Head of caudate nucleus (tissue), 42 donors: ENCODE measurements at regions of chr1 and their contacts with region 1.

Region 1: DNA sequence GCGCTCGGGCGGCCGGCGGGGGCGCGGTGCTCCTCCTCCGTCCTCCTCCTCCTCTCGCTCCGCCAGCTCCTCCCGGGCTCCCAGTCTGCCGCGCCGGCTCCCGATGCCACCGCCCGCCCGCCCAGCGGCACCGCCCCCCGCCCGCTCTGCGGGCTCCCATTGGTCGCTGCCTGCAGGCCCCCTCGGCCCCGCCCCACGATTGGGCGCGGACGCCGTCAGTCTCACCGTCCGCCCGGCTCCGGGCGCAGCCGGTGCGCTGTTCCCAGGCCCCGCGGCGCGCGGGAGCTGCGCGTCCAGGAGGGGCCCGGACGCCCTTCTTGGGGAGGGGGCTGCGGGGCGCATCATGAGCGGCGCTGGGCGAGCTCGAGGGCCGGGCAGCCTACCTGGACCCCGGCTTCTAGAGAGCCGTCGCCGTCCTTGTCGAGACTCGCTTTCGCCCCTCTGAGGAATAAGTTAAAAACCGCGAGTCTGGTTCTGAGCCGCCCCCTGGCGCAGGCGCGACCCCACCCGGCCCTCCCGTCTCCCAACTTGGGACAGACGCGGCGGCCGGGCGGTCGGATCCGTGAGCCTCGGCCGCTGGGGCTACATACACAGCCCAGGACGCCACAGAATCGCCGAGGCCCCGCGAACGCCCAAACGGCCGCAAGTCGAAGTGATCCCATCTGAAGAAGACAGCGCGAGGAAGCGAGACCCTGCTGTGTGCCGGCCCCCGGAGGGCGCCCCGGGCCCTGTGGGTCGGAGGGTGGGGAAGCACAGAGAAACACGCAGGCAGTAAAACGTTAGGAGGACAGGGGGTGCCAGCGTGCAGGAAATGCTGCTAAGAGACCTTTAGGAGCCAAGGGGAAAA is at the start of gene SIPA1L2:
- DNase-seq: peak; percentile 85 to 99 (median 97)

Region 2: GRCh38 chr1:231866392-231867331 is 763.6 kb before region 1 on chr1:
- intact Hi-C with region 1: loop called (anchors 10 kb)
- DNase-seq: peak in 40 of 42 donors; percentile 26 to 88 (median 70)

Region 3: GRCh38 chr1:232508130-232508701 is 122.1 kb before region 1 on chr1:
- intact Hi-C with region 1: loop called (anchors 5 kb)
- DNase-seq: peak; percentile 35 to 89 (median 76)

Region 4: DNA sequence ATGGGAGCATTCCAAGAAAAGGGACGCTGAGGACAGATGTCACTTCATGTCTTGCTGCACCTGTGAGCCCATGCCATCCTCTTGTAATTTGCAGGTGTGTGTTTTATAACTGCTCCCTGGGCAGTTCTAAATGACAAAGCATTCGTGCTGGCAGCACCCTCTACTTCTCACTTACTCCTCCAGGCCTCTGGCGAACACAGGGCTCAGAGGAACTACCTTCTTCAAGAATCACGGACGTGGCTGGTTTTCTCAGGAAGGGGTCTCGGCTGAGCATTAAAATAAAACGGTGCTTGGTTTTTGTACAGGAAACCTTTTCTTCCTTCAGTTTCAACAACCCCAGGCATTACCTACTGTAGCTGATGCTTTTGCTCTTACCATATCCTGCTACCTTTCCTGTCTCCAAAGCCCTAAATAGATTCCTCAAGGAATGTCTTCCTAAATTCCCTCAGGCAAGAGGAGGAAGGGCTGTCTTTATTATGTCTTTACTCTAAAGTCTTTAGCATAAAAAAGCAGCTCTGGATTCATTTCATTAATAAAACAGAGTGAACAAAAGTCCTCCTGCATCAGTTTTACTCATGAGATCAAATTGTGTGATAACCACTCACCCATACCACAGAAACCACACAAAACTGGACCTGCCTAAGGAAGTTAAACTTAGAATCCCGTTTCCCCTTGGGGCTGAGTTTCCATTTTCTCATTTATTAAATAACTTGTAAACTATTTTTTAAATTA is 95.9 kb after region 1 on chr1:
- intact Hi-C with region 1: no loop called
- DNase-seq: no peak

Region 5: GRCh38 chr1:232805269-232806185 is 175.3 kb after region 1 on chr1 and contains the start of gene MAP10:
- intact Hi-C with region 1: loop called (anchors 5 kb)
- DNase-seq: peak; percentile 45 to 88 (median 76)

Region 6: DNA sequence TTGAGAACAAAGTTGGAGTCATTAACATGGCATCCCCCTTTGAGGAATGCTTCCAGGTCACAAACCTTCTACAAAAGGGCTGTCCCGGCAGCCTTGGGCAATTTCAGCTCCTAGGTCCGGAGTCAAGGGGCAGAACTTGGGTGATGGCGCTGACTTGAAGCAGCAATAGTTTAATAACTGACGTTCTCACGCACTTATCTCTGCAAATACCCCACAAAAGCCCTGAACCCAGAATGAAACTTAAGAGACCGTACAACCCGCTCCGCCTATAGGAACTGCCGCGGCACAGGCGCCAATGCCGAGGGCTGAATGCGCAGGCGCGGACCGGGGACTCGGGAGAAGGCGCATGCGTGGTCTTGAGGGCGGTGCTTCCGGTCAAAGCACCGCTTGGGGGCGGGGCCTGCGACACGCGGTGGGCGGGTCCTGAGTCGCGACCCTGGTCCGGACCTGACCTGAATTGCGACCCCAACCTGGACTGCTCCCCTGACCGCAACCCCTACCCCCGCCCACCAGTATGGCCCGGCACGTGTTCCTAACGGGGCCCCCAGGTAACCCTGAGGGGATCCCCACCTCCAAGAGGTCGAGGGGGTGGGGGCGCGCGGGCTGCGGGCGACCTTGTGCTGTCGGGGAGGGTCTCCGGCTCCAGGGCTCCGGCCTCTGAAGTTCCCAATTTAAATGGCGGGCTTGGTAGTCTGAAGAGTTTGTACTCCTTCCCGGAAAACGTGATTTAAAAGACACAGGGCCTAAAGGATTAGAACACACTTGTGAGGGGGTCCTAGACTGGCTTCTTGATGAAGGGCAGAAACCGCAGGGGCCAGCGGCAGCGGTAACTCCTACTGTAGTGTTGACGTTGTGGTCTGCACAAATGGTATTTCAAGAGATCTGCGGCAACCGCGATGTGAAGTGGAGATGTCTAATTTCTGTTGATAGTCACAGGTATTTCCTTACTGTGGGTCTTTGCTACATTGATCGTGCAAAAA is 320.2 kb after region 1 on chr1 and contains the start of gene NTPCR:
- intact Hi-C with region 1: loop called (anchors 2 kb)
- DNase-seq: peak; percentile 70 to 97 (median 91)

Region 7: GRCh38 chr1:233240829-233241682 is 610.8 kb after region 1 on chr1:
- intact Hi-C with region 1: loop called (anchors 5 kb)
- DNase-seq: peak; percentile 61 to 93 (median 77)